Activated CD4-positive, alpha-beta memory T cell treated with anti-CD3 and anti-CD28 coated beads for 36 hours (primary cell): ENCODE measurements at regions of chr9 and their contacts with region 1.

Region 1: DNA sequence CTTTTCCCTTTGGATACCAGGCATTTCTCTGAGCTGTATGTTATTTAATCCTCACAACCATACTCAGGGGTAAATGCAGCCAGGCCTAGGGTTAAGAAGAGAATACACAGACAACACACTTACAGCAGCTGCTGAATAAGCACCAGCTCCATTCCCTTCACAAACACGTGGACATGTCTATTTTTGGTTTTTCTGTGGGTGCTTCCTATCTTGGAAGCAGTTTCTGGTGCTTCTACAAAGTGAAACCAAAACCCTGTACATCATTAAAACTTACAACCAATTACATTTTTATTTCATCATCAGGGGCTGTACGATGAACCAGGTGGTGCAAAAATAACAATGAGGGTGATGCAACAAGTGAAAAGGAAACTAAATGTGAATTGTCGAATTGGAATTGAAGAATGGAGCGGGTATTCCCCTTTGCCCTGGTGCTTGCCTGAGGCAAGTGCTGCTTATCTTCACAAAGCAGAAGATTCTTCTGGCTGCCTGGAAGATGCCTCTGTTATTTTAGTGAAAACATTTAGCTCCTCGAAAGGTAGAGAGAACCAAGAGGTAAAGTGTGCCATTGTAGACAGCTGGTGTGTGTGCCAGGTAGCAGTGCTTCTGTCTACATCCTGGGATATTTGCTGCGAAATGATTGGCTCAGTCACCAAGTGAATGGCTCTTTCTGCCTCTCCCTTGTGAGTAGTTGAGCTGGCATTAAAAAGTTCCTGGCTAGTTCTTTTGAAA is 18.6 kb upstream of the IFNB1 start:
- DNase-seq: peak; percentile 49
- H3K4me3 Mint-ChIP-seq: peak overlapping the region; percentile 73
- H3K27ac Mint-ChIP-seq: peak overlapping the region; percentile 85
- H3K4me1 Mint-ChIP-seq: peaks cover 34% of the 10 kb centered on the region
- H3K27me3 Mint-ChIP-seq: no peaks in the 10 kb centered on the region

Region 2: GRCh38 chr9:20558566-20559016 is 537.7 kb before region 1 on chr9:
- CTCF ChIA-PET with region 1: no interaction called
- POLR2A ChIA-PET with region 1: no interaction called
- intact Hi-C with region 1: no loop called
- DNase-seq: peak; percentile 60
- H3K4me3 Mint-ChIP-seq: no peak overlapping the region
- H3K27ac Mint-ChIP-seq: peak overlapping the region; percentile 65
- H3K4me1 Mint-ChIP-seq: peaks cover 86% of the 10 kb centered on the region
- H3K27me3 Mint-ChIP-seq: no peaks in the 10 kb centered on the region

Region 3: GRCh38 chr9:20569525-20569924 is 526.8 kb before region 1 on chr9:
- CTCF ChIA-PET with region 1: no interaction called
- POLR2A ChIA-PET with region 1: no interaction called
- intact Hi-C with region 1: loop called (anchors 5 kb)
- DNase-seq: no peak
- H3K4me3 Mint-ChIP-seq: no peak overlapping the region
- H3K27ac Mint-ChIP-seq: no peak overlapping the region
- H3K4me1 Mint-ChIP-seq: peaks cover 72% of the 10 kb centered on the region
- H3K27me3 Mint-ChIP-seq: no peaks in the 10 kb centered on the region

Region 4: GRCh38 chr9:21078717-21079116 is 17.6 kb before region 1 on chr9:
- CTCF ChIA-PET with region 1: interaction called, 9 read pairs
- POLR2A ChIA-PET with region 1: no interaction called
- intact Hi-C with region 1: loop called (anchors 1 kb)
- DNase-seq: no peak
- H3K4me3 Mint-ChIP-seq: no peak overlapping the region
- H3K27ac Mint-ChIP-seq: no peak overlapping the region
- H3K4me1 Mint-ChIP-seq: peaks cover 21% of the 10 kb centered on the region
- H3K27me3 Mint-ChIP-seq: peaks cover 2% of the 10 kb centered on the region

Region 5: GRCh38 chr9:21357479-21358460 is 261.4 kb after region 1 on chr9:
- CTCF ChIA-PET with region 1: no interaction called
- POLR2A ChIA-PET with region 1: no interaction called
- intact Hi-C with region 1: no loop called
- DNase-seq: peak; percentile 30
- H3K4me3 Mint-ChIP-seq: peak overlapping the region; percentile 3
- H3K27ac Mint-ChIP-seq: no peak overlapping the region
- H3K4me1 Mint-ChIP-seq: peaks cover 20% of the 10 kb centered on the region
- H3K27me3 Mint-ChIP-seq: peaks cover 38% of the 10 kb centered on the region